Spleen (tissue), 13 donors: ENCODE measurements at regions of chr15 and their contacts with region 1.

Region 1: GRCh38 chr15:80989518-80990478 is at the start of gene MESD:
- DNase-seq: peak; percentile 99
- H3K4me3 ChIP-seq: peak within 1 kb of the TSS; percentile 74 to 93 (median 89)
- H3K27ac ChIP-seq: peak within 1 kb of the TSS; percentile 85 to 96 (median 92)
- H3K4me1 ChIP-seq: peaks cover 29 to 69% (median 59%) of the 10 kb centered on the region in 6 donors
- H3K27me3 ChIP-seq: no peaks in the 10 kb centered on the region
- CTCF ChIP-seq: peak in 1 of 11 experiments; percentile 43
- POLR2A ChIP-seq: peak in 2 of 3 donors; percentile 20 to 68
- total RNA-seq, gene MESD: 25.4 to 39.8 (median 29.1) TPM

Region 2: GRCh38 chr15:80942746-80943555 is 46.8 kb before region 1 on chr15:
- intact Hi-C with region 1: no loop called
- DNase-seq: no peak
- H3K4me3 ChIP-seq: no peak overlapping the region
- H3K27ac ChIP-seq: no peak overlapping the region
- H3K4me1 ChIP-seq: peaks cover 0 to 7% (median 0%) of the 10 kb centered on the region in 6 donors
- H3K27me3 ChIP-seq: no peaks in the 10 kb centered on the region
- CTCF ChIP-seq: no peak
- POLR2A ChIP-seq: no peak

Region 3: DNA sequence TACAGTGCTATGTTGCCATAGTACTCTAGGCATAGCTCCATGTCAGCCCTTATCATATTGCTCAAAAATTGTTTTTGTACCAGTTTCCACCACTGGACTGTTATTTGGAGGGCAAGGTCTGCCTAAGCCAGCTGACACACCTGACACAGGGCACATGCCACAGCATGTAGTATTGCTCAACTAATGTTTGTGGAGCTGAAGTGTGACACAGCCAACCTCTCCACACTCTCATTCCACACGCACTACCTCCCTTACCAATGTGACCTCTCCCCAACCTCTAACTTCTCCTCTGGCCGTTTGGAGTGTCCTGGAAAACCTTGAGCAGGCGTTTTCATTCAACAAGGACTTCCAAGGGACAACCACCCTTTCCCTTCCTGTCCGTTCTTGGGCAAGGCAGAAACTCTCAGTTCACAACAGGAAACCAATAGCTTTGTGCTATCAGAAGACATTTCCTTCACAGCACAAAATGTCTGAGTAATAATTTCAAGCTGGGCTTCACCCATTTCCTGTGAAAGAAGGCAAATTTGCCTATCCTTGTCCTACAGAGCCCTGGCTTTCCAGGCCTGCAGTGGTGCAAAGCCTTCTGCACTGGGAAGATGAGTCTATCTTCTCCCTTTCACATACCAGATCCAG is 49.3 kb after region 1 on chr15:
- intact Hi-C with region 1: no loop called
- DNase-seq: no peak
- H3K4me3 ChIP-seq: no peak overlapping the region
- H3K27ac ChIP-seq: peak overlapping the region in 6 of 8 donors; percentile 2 to 69 (median 60)
- H3K4me1 ChIP-seq: peaks cover 2 to 34% (median 11%) of the 10 kb centered on the region in 6 donors
- H3K27me3 ChIP-seq: no peaks in the 10 kb centered on the region
- CTCF ChIP-seq: no peak
- POLR2A ChIP-seq: no peak

Region 4: GRCh38 chr15:81106560-81106959 is 116.8 kb after region 1 on chr15:
- intact Hi-C with region 1: loop called (anchors 10 kb)
- DNase-seq: no peak
- H3K4me3 ChIP-seq: no peak overlapping the region
- H3K27ac ChIP-seq: no peak overlapping the region
- H3K4me1 ChIP-seq: peaks cover 0 to 6% (median 0%) of the 10 kb centered on the region in 6 donors
- H3K27me3 ChIP-seq: peaks cover 0 to 11% (median 0%) of the 10 kb centered on the region in 7 donors
- CTCF ChIP-seq: peak; percentile 47 to 81 (median 74)
- POLR2A ChIP-seq: no peak